Breast epithelium (tissue), 4 donors: ENCODE measurements at regions of chr15 and their contacts with region 1.

Region 1: DNA sequence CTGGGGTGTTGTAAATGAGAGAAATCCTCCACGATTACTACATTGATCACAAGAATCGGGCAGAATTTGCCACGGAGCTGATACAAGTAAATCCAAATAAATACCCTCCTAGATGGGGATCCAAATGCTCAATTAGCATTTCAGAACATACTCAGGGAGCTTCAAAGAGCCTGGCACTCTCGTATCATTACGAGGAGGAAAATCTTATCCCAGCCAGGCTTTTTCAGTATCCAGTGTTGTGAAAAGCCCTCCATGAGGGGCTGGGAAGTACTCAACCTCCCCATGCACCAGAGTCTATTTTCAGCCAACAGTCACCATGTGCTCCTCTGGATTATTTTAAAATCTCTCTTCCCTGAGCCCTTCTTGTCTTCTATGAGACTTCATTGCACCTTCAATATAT is 122.6 kb upstream of the ARRDC4 start:
- DNase-seq: no peak
- H3K4me3 ChIP-seq: no peak overlapping the region
- H3K27ac ChIP-seq: no peak overlapping the region
- H3K4me1 ChIP-seq: no peaks in the 10 kb centered on the region
- H3K27me3 ChIP-seq: no peaks in the 10 kb centered on the region
- CTCF ChIP-seq: no peak
- POLR2A ChIP-seq: no peak

Region 2: DNA sequence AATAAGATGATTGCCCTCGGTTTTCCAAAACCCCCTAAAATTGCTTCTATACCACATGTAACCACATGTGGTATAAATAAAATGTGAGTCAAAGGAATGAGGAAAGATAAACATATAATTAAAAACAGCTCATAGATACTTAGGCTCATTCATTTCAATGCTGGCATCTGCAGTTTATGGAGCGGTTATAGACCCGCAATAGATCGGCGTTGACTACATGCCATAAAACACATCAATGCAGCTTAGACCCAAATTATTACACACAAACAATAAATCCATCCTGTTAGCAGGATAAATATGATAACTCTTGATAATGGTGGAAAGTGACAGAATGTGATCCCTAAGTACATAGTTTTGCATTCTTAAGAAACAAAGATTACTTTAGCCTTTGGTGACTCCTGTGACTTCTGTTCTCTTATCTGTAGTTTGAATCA is 1363.6 kb before region 1 on chr15:
- intact Hi-C with region 1: loop called (anchors 5 kb)
- DNase-seq: no peak
- H3K4me3 ChIP-seq: no peak overlapping the region
- H3K27ac ChIP-seq: no peak overlapping the region
- H3K4me1 ChIP-seq: no peaks in the 10 kb centered on the region
- H3K27me3 ChIP-seq: peaks cover 0 to 9% of the 10 kb centered on the region in 2 donors
- CTCF ChIP-seq: no peak
- POLR2A ChIP-seq: no peak

Region 3: GRCh38 chr15:97804955-97805354 is 32.9 kb before region 1 on chr15:
- intact Hi-C with region 1: no loop called
- DNase-seq: no peak
- H3K4me3 ChIP-seq: no peak overlapping the region
- H3K27ac ChIP-seq: no peak overlapping the region
- H3K4me1 ChIP-seq: no peaks in the 10 kb centered on the region
- H3K27me3 ChIP-seq: peaks cover 0 to 4% of the 10 kb centered on the region in 2 donors
- CTCF ChIP-seq: no peak
- POLR2A ChIP-seq: no peak

Region 4: GRCh38 chr15:97858296-97858695 is 20.4 kb after region 1 on chr15:
- intact Hi-C with region 1: no loop called
- DNase-seq: no peak
- H3K4me3 ChIP-seq: no peak overlapping the region
- H3K27ac ChIP-seq: no peak overlapping the region
- H3K4me1 ChIP-seq: no peaks in the 10 kb centered on the region
- H3K27me3 ChIP-seq: no peaks in the 10 kb centered on the region
- CTCF ChIP-seq: no peak
- POLR2A ChIP-seq: no peak